ENCODE measurements at regions of chr14 and their contacts with region 1.

Region 1: DNA sequence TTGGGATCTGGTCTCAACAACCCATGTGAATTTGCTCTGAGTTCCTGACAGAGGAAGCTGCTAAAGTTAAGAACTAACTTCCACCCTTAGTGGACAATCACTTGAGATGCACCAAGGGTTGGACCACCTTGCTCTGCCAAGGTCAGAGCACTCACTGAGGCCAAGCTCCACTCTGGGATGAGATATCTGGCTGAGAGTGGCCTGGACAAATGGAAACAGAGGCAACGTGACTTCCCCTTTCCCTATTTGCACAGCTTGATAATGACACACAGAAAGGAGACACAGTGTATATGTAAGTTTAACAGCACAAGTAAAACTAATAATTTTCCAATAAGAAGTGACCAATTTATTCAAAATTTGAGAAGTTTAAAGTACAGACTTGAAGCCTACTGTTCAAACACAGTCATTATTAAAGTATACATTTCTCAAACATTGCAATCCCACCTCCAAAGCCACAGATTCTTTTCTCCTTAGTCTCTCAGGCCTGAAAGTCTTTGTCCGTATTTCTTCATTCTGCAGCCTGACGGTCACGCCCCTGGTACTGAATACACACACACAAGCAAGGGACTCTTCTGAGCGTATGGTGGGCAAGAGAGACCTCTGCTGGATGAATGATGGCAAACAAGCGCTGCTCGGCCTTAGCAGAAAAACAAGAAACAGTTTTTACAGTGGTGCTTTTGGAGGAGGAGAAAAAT is 28.6 kb downstream of the TMEM30B start:
- DNase-seq: peak; percentile 68
- CTCF ChIP-seq: peak; percentile 86

Region 2: GRCh38 chr14:60349663-60350365 is 902.7 kb before region 1 on chr14:
- CTCF ChIA-PET with region 1: interaction called, 13 read pairs
- POLR2A ChIA-PET with region 1: no interaction called
- DNase-seq: peak; percentile 54
- CTCF ChIP-seq: peak; percentile 65

Region 3: DNA sequence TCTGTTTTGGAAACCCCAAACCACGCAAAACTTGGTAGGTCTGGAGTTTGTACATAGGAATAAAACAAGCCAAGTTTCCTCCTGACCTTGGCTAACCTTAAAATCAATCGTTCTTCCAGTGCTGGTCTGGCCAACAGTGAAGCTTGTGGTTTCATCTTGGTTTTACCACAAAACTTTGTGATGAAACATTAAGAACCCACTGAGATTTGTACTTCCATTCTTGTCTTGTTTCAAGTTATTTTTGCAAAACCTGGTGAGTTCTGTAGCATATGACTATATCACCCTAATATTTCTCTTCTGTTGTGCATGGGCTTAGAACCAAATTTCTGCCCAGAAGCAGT is 629.6 kb before region 1 on chr14:
- CTCF ChIA-PET with region 1: interaction called, 111 read pairs
- POLR2A ChIA-PET with region 1: no interaction called
- DNase-seq: no peak
- CTCF ChIP-seq: no peak

Region 4: DNA sequence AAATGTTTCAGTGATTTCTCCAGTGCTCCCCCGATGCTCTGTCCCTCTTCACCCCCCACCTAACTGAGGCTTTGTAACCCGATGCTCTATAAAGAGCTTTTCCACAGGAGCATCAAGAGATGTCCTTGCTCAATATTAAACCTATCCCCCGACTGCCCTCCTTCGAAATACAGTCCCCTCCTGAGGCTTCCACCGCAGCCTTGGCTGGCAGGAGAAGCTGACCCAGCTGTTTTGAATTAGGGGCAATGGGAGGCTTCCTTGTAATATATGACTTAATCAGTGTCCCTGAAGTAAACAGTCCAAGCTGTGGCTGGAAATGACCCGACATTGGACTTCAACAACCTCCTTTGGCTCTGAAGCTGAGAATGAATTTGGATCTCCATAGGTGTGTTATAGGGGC is 33.7 kb before region 1 on chr14:
- CTCF ChIA-PET with region 1: interaction called, 26 read pairs
- POLR2A ChIA-PET with region 1: no interaction called
- DNase-seq: no peak
- CTCF ChIP-seq: no peak

Region 5: DNA sequence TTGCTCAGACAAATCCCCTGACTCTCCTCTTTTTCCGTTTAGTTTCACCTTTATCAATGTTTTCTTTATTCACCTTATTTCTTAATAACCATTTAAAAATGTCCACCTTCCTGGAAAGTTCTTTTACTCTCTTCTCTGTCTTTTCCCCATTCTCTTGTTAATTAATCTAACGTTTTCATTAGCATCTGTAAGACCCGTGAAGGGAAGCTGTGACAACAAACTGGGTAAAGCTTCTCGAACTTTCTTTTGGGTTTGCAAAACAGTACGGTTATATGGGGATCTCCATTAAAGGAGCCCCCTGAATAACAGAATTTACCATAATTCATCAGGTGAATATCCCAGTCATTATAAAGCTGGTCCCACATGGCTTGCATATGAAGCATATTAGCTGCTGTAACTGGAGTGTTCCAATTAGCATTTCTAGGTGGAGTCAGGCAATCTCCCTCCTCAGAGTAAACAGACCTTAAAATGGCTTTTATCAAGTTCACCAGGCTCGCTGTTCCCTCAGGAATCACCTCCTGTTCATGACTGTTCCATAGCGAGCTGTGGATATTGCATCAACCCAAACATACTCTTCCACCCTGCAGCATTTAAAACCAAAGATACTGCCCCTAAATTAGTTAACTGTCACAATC is 13.8 kb before region 1 on chr14:
- CTCF ChIA-PET with region 1: interaction called, 14 read pairs
- POLR2A ChIA-PET with region 1: no interaction called
- DNase-seq: no peak
- CTCF ChIP-seq: no peak

Region 6: GRCh38 chr14:61264010-61264571 is 11.6 kb after region 1 on chr14:
- CTCF ChIA-PET with region 1: interaction called, 13 read pairs
- POLR2A ChIA-PET with region 1: no interaction called
- DNase-seq: no peak
- CTCF ChIP-seq: no peak

Region 7: DNA sequence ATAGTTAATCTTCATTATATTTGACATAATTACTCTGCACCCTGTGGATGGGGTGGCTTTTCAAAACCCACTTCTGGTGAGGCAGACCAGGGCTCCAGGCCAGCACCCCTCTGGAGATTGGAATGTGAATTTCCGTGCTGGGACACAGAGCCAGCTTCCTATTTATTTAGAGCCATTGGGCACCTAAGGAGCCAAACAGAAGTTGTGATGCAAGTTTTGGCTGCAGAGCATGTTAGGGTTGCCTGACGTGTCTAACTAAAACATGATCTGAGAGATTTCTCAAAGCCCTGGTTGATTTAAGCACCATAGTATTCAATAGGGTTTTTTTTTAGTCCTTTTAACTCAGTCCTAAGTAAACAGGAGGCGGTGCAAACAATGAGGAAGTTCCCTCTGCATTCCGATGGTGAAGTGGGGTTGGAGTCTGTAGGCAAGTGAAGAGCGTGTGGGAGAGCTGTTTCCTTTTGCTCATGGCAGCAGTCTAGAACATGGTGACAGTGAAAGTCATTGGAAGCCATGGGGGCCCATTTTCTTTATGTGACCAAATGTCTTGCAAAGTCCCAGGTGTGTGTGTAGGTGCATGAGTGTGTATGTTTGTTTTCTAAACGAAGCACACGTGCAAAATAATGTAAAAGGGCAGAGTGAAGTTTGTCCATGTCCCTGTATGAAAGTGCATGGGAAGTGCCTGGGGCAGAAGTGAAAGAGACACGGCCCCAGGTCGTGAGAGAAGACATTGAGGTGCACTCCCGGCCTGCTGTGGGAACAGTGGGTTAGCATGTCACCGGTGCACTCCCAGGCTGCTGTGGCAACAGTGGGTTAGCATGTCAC is 186.6 kb after region 1 on chr14:
- CTCF ChIA-PET with region 1: no interaction called
- POLR2A ChIA-PET with region 1: no interaction called
- DNase-seq: peak; percentile 53
- CTCF ChIP-seq: no peak

Region 8: GRCh38 chr14:61553725-61554641 is 301.5 kb after region 1 on chr14:
- CTCF ChIA-PET with region 1: no interaction called
- POLR2A ChIA-PET with region 1: no interaction called
- DNase-seq: no peak
- CTCF ChIP-seq: no peak

Measured in GM10248 (cell line).